ENCODE measurements at regions of chr4 and their contacts with region 1.

Region 1: DNA sequence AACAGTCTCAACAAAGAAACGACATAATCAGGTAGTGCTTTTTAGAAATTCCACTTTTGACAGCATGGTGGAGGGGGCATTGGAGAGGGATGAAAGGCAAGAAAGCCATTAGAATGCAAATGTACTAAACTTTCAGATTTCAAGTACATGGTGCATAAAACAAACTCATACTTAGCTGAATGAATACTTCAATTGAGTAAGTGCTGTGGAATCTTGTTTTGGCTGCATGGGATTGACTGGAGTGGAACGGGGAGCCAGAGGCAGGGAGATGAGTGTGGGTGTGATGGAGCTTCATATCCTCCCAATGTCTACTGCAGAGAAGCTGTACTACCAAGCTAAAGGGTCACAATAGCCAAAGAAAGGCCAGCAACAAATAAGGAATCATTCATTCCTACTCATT is 52.4 kb downstream of the USP46 start:
- DNase-seq: no peak
- ATAC-seq: no peak

Region 2: DNA sequence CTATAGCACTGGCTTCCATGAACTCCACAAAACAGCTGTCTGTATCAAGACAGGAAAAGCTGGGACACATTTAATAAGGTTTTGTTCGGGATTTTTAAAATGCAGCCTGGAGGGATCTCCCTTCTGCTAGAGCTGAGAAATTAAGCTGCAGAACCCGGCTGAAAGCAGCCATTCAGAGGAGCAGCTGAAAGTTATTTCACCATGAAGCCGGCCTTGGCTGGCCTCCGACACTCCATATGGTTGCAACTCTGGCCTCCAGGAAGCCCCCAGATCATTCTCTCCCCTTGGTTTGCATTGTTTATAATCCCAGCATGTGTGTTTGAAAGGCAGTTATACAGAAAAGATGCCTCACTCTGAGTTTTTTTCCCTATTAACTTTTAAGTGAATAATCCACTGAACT is 316.3 kb before region 1 on chr4:
- intact Hi-C with region 1: no loop called
- DNase-seq: peak; percentile 54
- ATAC-seq: peak; percentile 56

Region 3: DNA sequence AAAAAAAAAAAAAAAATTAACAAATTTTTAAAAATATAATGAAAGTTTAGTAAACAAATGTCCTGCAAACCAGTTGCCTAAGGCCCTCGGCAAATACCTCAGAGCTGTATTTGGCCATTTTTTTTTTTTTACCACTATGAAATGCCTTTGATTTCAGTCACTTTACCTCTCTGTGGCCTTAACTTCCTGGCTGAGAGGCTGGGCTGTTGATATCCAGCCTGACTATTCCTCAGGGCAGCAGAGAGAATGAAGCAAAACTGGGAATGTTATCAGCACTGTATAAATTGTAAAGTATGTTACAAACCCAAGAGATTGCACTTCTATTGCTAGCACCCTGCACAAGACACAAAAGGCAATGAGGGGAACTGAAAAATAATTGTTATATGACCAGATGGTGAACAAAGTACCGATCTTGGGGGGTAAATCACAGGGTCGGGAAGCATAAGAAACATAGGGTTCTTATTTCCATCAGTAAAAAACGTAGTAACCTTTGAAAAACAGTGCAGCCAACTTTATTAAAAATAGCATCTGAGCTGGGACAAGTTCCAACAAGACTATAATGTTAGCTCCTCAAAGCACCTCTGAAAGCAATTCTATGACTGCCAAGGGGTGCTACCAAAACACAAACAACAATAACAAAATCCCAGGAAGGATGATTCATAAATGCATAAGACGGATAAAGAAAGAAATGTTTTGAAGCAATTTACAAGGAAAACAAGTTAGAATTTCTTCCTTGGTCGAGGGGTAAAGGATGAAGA is 34.3 kb after region 1 on chr4:
- intact Hi-C with region 1: loop called (anchors 1 kb)
- DNase-seq: no peak
- ATAC-seq: no peak

Region 4: GRCh38 chr4:52853351-52853750 is 246.6 kb after region 1 on chr4:
- intact Hi-C with region 1: no loop called
- DNase-seq: no peak
- ATAC-seq: peak; percentile 37

Measured in Right ventricle myocardium inferior (tissue), 1 donor.